Activated T-helper 2 cell treated with anti-CD3 and anti-CD28 coated beads, Interferon-gamma antibody, Interleukin-2, Interleukin-4, amounts not matched to agents 10 μg/mL and 5 μg/mL and 100 μg/mL, durations not matched to agents 14 hours and 24 hours and 36 hours (primary cell): ENCODE measurements at regions of chr12 and their contacts with region 1.

Region 1: DNA sequence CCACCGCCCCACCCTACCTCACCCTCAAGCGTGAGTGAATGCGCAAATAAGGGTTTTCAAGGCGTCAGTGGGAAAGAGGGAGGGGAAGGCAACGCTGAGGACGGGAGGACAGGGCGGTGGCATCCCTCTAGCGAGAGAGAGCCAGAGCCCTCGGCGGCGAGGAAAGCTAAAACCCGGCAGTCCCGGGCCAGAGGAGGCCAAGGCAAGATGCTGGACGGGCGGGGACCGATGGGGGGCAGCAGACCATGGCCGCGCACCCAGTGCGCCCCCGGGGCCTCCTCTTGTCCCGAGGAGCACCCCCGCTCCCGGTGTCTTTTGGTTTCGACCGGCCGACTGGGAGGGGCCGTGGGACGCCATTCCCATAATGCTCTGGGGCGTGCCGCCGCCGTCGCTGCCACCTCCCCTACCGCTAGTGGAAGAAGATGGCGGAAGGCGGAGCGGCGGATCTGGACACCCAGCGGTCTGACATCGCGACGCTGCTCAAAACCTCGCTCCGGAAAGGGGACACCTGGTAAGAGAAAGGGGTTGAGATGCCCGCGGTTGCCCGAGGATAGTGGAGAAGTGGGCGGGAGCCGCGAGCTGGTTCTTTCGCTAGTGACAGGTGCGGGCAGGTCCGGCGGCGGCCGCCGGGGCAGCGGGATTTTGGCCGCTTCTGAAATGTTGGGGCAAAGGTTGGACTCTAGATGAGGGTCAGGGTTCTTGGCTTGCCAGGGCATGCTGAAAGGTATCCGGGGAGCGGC is at the start of gene USP15:
- DNase-seq: peak; percentile 95
- H3K4me3 Mint-ChIP-seq: peak within 1 kb of the TSS; percentile 99
- H3K27ac Mint-ChIP-seq: peak within 1 kb of the TSS; percentile 93
- H3K4me1 Mint-ChIP-seq: peaks cover 53% of the 10 kb centered on the region
- H3K27me3 Mint-ChIP-seq: no peaks in the 10 kb centered on the region
- total RNA-seq, gene USP15: 82.4 and 91.1 TPM in 2 replicates

Region 2: GRCh38 chr12:62291864-62292760 is 31.9 kb after region 1 on chr12:
- intact Hi-C with region 1: loop called (anchors 1 kb)
- DNase-seq: no peak
- H3K4me3 Mint-ChIP-seq: peak overlapping the region; percentile 10
- H3K27ac Mint-ChIP-seq: peak overlapping the region; percentile 68
- H3K4me1 Mint-ChIP-seq: peaks cover 73% of the 10 kb centered on the region
- H3K27me3 Mint-ChIP-seq: no peaks in the 10 kb centered on the region

Region 3: GRCh38 chr12:62347922-62348650 is 87.9 kb after region 1 on chr12:
- intact Hi-C with region 1: loop called (anchors 5 kb)
- DNase-seq: no peak
- H3K4me3 Mint-ChIP-seq: no peak overlapping the region
- H3K27ac Mint-ChIP-seq: no peak overlapping the region
- H3K4me1 Mint-ChIP-seq: peaks cover 9% of the 10 kb centered on the region
- H3K27me3 Mint-ChIP-seq: no peaks in the 10 kb centered on the region

Region 4: DNA sequence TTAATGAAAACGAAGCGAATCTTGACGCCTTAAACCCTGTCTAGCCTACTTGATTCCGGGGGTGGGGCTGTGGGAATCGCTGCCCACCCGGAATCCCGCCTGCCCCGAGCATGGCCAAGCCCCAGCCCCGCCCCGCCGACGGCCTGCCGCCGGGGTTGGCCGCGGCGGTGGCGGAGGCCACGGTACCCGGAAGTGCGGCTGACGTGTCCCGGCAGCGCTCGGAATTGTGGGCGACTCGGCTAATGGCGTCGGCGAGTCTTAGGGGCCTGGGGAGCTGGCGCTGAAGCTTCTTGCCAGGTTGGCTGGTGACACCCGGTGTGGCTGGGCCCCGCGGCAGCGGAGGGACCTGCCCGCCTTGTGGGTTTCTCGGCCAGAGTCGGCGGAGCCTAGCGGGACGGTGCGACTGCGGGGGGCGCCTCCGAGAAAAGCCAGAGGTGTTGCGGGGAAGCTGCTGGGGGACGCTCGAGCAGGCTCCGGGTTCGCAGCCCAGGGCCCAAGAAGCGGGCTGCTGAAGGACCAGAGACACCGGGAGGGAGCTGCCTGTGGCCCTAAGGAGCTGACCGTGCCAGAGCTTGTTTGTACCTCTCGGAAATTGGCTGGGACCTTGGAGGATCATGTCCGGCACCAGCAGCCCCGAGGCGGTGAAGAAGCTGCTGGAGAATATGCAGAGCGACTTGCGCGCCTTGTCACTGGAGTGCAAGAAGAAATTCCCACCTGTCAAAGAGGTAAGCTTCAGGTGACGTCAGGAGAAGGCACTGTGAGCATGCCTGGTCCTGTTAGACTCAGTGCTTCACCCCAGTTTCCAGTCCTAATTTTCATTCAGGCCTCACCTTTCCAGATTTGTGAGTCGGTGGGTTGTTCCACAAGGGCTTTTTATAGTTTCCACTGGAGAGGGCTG is 206.7 kb after region 1 on chr12 and contains the start of gene MON2:
- intact Hi-C with region 1: loop called (anchors 2 kb)
- DNase-seq: peak; percentile 83
- H3K4me3 Mint-ChIP-seq: peak within 1 kb of the TSS; percentile 94
- H3K27ac Mint-ChIP-seq: peak within 1 kb of the TSS; percentile 91
- H3K4me1 Mint-ChIP-seq: peaks cover 20% of the 10 kb centered on the region
- H3K27me3 Mint-ChIP-seq: peaks cover 3% of the 10 kb centered on the region
- total RNA-seq, gene MON2: 33.0 and 37.6 TPM in 2 replicates